ENCODE measurements at regions of chr1 and their contacts with region 1.

Region 1: GRCh38 chr1:88302843-88303486 is 381.1 kb upstream of the PKN2 start:
- DNase-seq: peak in 1 of 3 donors; percentile 36
- ATAC-seq: peak; percentile 43
- H3K4me3 ChIP-seq: no peak overlapping the region
- H3K4me1 ChIP-seq: peaks cover 2% of the 10 kb centered on the region
- CTCF ChIP-seq: no peak

Region 2: DNA sequence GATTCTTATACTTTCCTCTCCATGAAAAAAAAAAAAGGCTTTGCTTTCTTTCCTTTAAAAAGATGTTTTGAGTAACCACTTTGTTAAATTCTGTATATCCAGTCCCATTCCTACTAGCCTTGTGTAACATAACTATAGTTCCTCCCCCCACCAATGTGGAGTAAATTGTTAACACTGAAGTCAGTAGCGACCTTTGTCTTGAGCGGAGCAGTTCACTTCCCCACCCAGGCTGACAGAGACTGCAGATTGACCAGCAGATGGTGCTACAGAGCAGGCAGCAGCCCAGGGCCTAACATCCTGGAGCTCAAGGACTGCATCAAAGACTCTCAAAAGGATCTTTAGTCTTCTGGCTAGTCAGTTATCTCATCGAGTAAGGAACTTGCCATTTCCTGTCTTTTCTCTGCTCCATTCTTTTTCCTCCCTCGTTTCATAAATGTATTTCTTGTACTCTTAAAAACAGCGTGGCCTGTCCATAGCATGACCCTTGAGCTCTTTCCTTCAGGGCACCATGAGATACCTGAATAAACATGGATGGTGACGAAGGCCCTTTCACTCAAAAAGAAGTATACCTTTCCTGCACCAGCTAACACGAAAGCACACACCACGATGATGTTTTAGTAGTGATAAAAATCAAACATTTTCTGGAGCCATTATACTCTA is 122.4 kb before region 1 on chr1:
- intact Hi-C with region 1: loop called in 1 of 2 experiments (anchors 5 kb)
- DNase-seq: peak; percentile 71 to 86 (median 85)
- ATAC-seq: peak; percentile 99
- H3K4me3 ChIP-seq: no peak overlapping the region
- H3K4me1 ChIP-seq: no peaks in the 10 kb centered on the region
- CTCF ChIP-seq: peak; percentile 82

Region 3: GRCh38 chr1:88210103-88210787 is 92.7 kb before region 1 on chr1:
- intact Hi-C with region 1: no loop called
- DNase-seq: no peak
- ATAC-seq: peak; percentile 69
- H3K4me3 ChIP-seq: no peak overlapping the region
- H3K4me1 ChIP-seq: no peaks in the 10 kb centered on the region
- CTCF ChIP-seq: no peak

Measured in mucosa of descending colon (tissue), 3 donors.